Activated CD4-positive, alpha-beta T cell treated with anti-CD3 and anti-CD28 coated beads, Interleukin-2, amount 10 ng/mL, durations not matched to agents 24 days and 14 days (primary cell): ENCODE measurements at regions of chr13 and their contacts with region 1.

Region 1: DNA sequence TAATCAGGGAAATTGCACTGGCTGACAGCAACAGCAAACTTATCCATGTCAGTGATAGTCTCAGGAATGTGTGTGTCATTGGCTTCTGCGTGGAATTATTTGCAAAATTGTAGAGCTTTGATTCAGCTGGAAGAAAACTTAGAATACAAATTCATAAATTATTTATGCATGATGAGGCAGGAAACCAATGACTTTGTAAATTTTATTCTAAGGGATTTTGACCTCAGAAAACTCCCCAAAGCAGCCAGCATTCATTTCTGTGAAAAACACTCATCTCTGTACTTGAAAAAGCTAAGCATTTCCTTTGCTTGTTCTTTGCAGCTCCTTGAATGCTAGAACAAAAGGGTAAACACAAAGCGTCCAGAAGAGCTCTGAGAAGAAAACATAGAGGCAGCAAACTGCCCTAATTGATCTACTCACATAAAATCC is 162.4 kb downstream of the DCT start:
- DNase-seq: peak; percentile 74
- H3K4me3 Mint-ChIP-seq: peak overlapping the region; percentile 60
- H3K27ac Mint-ChIP-seq: peak overlapping the region; percentile 78
- H3K4me1 Mint-ChIP-seq: peaks cover 38% of the 10 kb centered on the region
- H3K27me3 Mint-ChIP-seq: no peaks in the 10 kb centered on the region

Region 2: GRCh38 chr13:94139393-94139995 is 177.6 kb before region 1 on chr13:
- intact Hi-C with region 1: no loop called
- DNase-seq: no peak
- H3K4me3 Mint-ChIP-seq: no peak overlapping the region
- H3K27ac Mint-ChIP-seq: no peak overlapping the region
- H3K4me1 Mint-ChIP-seq: no peaks in the 10 kb centered on the region
- H3K27me3 Mint-ChIP-seq: no peaks in the 10 kb centered on the region

Region 3: DNA sequence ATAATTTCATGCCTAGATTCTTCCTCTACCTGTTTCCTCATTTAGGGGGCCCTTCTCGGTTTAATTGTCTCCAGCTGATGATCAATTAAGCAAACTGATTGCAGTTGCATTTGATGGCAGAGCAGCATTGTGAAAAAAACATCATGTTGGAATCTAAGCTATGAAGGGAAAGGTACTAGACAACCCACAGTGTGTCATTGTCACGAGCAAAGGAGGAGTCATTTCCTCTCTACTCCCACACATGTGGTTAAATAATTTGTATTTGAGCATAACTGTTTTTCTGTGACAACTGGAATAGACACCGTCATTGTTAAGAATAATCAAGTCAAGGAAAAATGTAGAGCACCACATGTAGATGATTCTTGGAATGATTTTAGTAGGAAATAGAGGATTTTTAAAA is 77.9 kb before region 1 on chr13:
- intact Hi-C with region 1: loop called (anchors 5 kb)
- DNase-seq: peak; percentile 60
- H3K4me3 Mint-ChIP-seq: no peak overlapping the region
- H3K27ac Mint-ChIP-seq: no peak overlapping the region
- H3K4me1 Mint-ChIP-seq: peaks cover 29% of the 10 kb centered on the region
- H3K27me3 Mint-ChIP-seq: peaks cover under 1% of the 10 kb centered on the region

Region 4: GRCh38 chr13:94345374-94346195 is 28.5 kb after region 1 on chr13:
- intact Hi-C with region 1: loop called (anchors 2 kb)
- DNase-seq: peak; percentile 64
- H3K4me3 Mint-ChIP-seq: no peak overlapping the region
- H3K27ac Mint-ChIP-seq: no peak overlapping the region
- H3K4me1 Mint-ChIP-seq: peaks cover 13% of the 10 kb centered on the region
- H3K27me3 Mint-ChIP-seq: peaks cover 12% of the 10 kb centered on the region